Activated B cell treated with CpG ODN at 0.5 μM for 24 hours (primary cell): ENCODE measurements at regions of chr6 and their contacts with region 1.

Region 1: DNA sequence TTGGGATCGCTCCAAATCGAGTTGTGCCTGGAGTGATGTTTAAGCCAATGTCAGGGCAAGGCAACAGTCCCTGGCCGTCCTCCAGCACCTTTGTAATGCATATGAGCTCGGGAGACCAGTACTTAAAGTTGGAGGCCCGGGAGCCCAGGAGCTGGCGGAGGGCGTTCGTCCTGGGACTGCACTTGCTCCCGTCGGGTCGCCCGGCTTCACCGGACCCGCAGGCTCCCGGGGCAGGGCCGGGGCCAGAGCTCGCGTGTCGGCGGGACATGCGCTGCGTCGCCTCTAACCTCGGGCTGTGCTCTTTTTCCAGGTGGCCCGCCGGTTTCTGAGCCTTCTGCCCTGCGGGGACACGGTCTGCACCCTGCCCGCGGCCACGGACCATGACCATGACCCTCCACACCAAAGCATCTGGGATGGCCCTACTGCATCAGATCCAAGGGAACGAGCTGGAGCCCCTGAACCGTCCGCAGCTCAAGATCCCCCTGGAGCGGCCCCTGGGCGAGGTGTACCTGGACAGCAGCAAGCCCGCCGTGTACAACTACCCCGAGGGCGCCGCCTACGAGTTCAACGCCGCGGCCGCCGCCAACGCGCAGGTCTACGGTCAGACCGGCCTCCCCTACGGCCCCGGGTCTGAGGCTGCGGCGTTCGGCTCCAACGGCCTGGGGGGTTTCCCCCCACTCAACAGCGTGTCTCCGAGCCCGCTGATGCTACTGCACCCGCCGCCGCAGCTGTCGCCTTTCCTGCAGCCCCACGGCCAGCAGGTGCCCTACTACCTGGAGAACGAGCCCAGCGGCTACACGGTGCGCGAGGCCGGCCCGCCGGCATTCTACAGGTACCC is at the start of gene ESR1:
- DNase-seq: peak; percentile 32
- ATAC-seq: peak; percentile 79
- H3K4me3 Mint-ChIP-seq: peak within 1 kb of the TSS; percentile 84
- H3K27ac Mint-ChIP-seq: no peak within 1 kb of the TSS
- H3K4me1 Mint-ChIP-seq: peaks cover 17% of the 10 kb centered on the region
- H3K27me3 Mint-ChIP-seq: peaks cover 33% of the 10 kb centered on the region
- CTCF ChIP-seq: no peak
- total RNA-seq, gene ESR1: 10.9 and 17.5 TPM in 2 replicates

Region 2: DNA sequence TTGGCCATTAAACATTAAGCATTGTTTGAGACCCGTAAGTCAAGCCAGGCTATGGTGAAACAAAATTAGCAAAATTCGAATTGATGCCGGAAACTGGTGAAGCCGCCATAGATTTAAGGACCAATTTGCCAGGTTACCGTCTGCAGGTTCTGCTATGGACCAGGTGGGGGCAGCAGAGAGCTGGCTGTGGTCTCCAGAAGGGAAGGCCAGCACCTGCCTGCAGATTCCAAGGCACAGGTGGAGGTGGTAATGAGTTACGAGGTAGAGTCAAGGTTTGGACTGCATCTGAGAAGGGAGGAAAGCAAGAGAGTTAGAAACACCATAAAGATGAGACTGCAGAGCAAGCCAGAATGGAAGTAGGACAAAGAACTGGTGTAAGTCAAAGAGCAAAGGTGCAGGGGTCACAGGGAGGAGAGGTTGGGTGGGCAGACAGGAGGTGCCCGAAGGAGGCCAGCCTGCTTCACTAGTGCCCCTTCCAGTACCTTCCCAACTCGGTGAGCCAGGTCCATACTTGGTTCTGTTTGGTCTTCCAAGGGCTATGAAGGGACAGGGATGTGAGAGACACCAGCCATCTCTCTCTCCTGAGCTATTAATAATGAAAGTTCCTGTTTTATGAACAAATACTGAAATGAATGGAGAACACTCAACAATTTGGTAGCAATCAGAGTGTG is 131.9 kb before region 1 on chr6:
- CTCF ChIA-PET with region 1: no interaction called
- POLR2A ChIA-PET with region 1: interaction called, 3 read pairs
- intact Hi-C with region 1: loop called (anchors 5 kb)
- DNase-seq: peak; percentile 32
- ATAC-seq: peak; percentile 89
- H3K4me3 Mint-ChIP-seq: no peak overlapping the region
- H3K27ac Mint-ChIP-seq: no peak overlapping the region
- H3K4me1 Mint-ChIP-seq: peaks cover 4% of the 10 kb centered on the region
- H3K27me3 Mint-ChIP-seq: no peaks in the 10 kb centered on the region
- CTCF ChIP-seq: peak; percentile 74

Region 3: DNA sequence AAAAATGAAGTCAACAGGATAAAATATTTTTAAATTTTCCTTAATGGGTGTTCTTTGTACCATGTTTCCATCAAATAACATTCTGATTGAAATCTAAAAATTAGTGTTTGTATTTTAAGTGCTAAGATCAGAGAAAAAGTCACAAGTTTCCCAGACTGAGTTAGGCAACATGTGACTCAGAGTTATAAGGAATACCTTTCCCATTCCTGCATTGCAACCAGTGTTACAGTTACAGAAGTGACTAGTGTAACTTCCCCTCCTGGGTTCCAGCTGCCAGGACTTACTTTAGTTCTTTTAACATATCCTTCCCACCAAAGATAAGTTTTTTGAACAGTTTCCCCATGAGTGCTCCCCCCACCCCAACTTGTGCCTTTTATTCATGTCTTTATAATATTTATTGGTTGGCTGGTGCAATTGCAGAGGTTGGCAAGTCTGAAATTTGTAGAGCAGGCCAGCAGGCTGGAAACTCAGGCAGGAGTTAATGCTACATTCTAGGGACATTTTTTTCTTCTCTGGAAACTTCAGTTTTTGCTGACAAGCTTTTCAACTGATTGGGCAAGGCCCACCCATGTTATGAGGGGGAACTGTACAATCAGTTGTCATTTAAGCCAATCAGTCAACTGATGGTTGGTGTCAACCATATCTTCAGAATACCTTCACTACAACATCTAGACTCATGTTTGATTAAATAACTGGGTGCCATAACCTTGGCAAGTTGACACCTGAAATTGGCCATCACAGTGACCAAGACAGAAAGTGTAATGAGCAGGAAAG is 23.1 kb before region 1 on chr6:
- CTCF ChIA-PET with region 1: no interaction called
- POLR2A ChIA-PET with region 1: no interaction called
- intact Hi-C with region 1: no loop called
- DNase-seq: no peak
- ATAC-seq: no peak
- H3K4me3 Mint-ChIP-seq: no peak overlapping the region
- H3K27ac Mint-ChIP-seq: no peak overlapping the region
- H3K4me1 Mint-ChIP-seq: no peaks in the 10 kb centered on the region
- H3K27me3 Mint-ChIP-seq: no peaks in the 10 kb centered on the region
- CTCF ChIP-seq: no peak

Region 4: GRCh38 chr6:152026291-152026690 is 218.5 kb after region 1 on chr6:
- CTCF ChIA-PET with region 1: no interaction called
- POLR2A ChIA-PET with region 1: no interaction called
- intact Hi-C with region 1: loop called (anchors 10 kb)
- DNase-seq: no peak
- ATAC-seq: no peak
- H3K4me3 Mint-ChIP-seq: peak overlapping the region; percentile 60
- H3K27ac Mint-ChIP-seq: no peak overlapping the region
- H3K4me1 Mint-ChIP-seq: peaks cover 5% of the 10 kb centered on the region
- H3K27me3 Mint-ChIP-seq: no peaks in the 10 kb centered on the region
- CTCF ChIP-seq: no peak